ENCODE measurements at regions of chr2 and their contacts with region 1.

Region 1: GRCh38 chr2:64750817-64751285 is 97.1 kb upstream of the SERTAD2 start:
- DNase-seq: peak; percentile 98
- H3K4me3 Mint-ChIP-seq: peak overlapping the region; percentile 84
- H3K27ac Mint-ChIP-seq: peak overlapping the region; percentile 94
- H3K4me1 Mint-ChIP-seq: peaks cover 23% of the 10 kb centered on the region
- H3K27me3 Mint-ChIP-seq: no peaks in the 10 kb centered on the region

Region 2: GRCh38 chr2:64298161-64298560 is 452.7 kb before region 1 on chr2:
- CTCF ChIA-PET with region 1: no interaction called
- POLR2A ChIA-PET with region 1: no interaction called
- DNase-seq: no peak
- H3K4me3 Mint-ChIP-seq: no peak overlapping the region
- H3K27ac Mint-ChIP-seq: no peak overlapping the region
- H3K4me1 Mint-ChIP-seq: peaks cover 19% of the 10 kb centered on the region
- H3K27me3 Mint-ChIP-seq: peaks cover 18% of the 10 kb centered on the region

Region 3: GRCh38 chr2:64730551-64731262 is 20.1 kb before region 1 on chr2:
- CTCF ChIA-PET with region 1: interaction called, 12 read pairs
- POLR2A ChIA-PET with region 1: interaction called, 32 read pairs
- DNase-seq: peak; percentile 45
- H3K4me3 Mint-ChIP-seq: peak overlapping the region; percentile 74
- H3K27ac Mint-ChIP-seq: peak overlapping the region; percentile 84
- H3K4me1 Mint-ChIP-seq: peaks cover 52% of the 10 kb centered on the region
- H3K27me3 Mint-ChIP-seq: peaks cover 2% of the 10 kb centered on the region

Region 4: DNA sequence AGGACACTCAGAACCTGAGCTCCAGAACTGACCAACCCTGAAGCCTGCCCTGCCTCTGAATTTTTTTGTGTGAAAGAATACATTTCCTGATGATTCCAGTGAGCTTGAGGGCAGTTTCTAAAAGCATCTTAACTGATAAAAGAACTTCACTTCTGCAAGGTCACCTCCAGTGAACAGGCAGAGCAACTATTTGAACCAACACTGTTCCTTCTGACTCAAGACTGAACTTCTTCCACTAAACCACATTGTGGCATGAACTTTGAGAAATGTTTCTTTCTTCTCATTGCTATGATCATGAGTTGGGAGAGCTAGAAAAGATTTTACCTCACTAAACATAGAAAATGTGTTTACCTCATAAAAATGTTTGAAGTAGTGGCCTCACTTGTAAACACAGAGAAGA is 13.3 kb before region 1 on chr2:
- CTCF ChIA-PET with region 1: interaction called, 16 read pairs
- POLR2A ChIA-PET with region 1: interaction called, 17 read pairs
- DNase-seq: no peak
- H3K4me3 Mint-ChIP-seq: no peak overlapping the region
- H3K27ac Mint-ChIP-seq: peak overlapping the region; percentile 47
- H3K4me1 Mint-ChIP-seq: peaks cover 21% of the 10 kb centered on the region
- H3K27me3 Mint-ChIP-seq: peaks cover 2% of the 10 kb centered on the region

Region 5: GRCh38 chr2:64767670-64768468 is 17.0 kb after region 1 on chr2:
- CTCF ChIA-PET with region 1: interaction called, 8 read pairs
- POLR2A ChIA-PET with region 1: interaction called, 59 read pairs
- DNase-seq: peak; percentile 84
- H3K4me3 Mint-ChIP-seq: peak overlapping the region; percentile 80
- H3K27ac Mint-ChIP-seq: peak overlapping the region; percentile 79
- H3K4me1 Mint-ChIP-seq: peaks cover 23% of the 10 kb centered on the region
- H3K27me3 Mint-ChIP-seq: peaks cover 15% of the 10 kb centered on the region

Region 6: DNA sequence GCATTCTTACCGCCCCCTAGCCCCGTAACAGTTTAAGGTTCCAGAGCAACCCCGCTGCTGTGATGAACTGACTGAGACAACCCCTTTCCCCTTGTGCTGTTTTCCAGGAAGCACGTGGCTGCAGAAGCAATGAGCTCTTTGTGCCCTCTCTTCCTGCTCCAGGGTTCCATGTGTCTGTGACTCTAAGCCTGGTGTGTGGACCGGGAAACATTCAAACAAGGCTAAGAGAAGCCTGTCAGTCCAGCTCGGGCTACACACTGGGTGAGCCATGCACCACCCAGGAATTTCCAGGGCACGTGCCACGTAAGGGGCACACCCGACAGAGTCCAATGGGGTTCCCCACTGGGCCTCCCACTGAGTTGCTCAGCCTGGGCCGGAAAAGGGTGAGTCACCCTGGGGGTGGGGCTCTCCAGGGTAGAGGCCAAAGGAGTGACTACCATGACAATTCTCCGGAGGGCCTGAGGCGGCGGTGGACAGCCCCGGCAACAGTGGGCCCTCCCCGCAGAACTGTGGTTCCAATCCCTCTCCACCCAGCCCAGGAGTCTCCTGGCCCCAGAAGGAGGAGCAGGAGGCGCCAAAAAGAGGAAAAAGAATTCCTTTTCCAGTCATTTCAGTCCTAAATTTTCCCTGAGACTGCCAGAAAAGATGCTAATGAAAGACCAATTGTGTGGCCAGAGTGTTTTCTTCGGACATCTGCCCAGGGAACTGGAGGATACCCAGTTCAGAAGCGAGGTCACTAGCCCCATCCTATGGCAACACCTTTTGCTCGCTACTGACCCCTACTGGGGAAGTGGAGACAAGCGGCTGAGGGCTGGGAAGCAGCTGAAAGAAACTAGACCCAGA is 80.5 kb after region 1 on chr2:
- CTCF ChIA-PET with region 1: interaction called, 7 read pairs
- POLR2A ChIA-PET with region 1: interaction called, 15 read pairs
- DNase-seq: peak; percentile 85
- H3K4me3 Mint-ChIP-seq: peak overlapping the region; percentile 44
- H3K27ac Mint-ChIP-seq: peak overlapping the region; percentile 59
- H3K4me1 Mint-ChIP-seq: peaks cover 21% of the 10 kb centered on the region
- H3K27me3 Mint-ChIP-seq: peaks cover 7% of the 10 kb centered on the region

Region 7: GRCh38 chr2:64937687-64938491 is 187.0 kb after region 1 on chr2:
- CTCF ChIA-PET with region 1: no interaction called
- POLR2A ChIA-PET with region 1: no interaction called
- DNase-seq: no peak
- H3K4me3 Mint-ChIP-seq: no peak overlapping the region
- H3K27ac Mint-ChIP-seq: no peak overlapping the region
- H3K4me1 Mint-ChIP-seq: peaks cover 38% of the 10 kb centered on the region
- H3K27me3 Mint-ChIP-seq: peaks cover 12% of the 10 kb centered on the region

Measured in activated CD4-positive, alpha-beta memory T cell treated with anti-CD3 and anti-CD28 coated beads, Interleukin-2, amount 10 ng/mL, durations not matched to agents 7 days and 5 days (primary cell).